Gastrocnemius medialis (tissue), 4 donors: ENCODE measurements at regions of chr17 and their contacts with region 1.

Region 1: DNA sequence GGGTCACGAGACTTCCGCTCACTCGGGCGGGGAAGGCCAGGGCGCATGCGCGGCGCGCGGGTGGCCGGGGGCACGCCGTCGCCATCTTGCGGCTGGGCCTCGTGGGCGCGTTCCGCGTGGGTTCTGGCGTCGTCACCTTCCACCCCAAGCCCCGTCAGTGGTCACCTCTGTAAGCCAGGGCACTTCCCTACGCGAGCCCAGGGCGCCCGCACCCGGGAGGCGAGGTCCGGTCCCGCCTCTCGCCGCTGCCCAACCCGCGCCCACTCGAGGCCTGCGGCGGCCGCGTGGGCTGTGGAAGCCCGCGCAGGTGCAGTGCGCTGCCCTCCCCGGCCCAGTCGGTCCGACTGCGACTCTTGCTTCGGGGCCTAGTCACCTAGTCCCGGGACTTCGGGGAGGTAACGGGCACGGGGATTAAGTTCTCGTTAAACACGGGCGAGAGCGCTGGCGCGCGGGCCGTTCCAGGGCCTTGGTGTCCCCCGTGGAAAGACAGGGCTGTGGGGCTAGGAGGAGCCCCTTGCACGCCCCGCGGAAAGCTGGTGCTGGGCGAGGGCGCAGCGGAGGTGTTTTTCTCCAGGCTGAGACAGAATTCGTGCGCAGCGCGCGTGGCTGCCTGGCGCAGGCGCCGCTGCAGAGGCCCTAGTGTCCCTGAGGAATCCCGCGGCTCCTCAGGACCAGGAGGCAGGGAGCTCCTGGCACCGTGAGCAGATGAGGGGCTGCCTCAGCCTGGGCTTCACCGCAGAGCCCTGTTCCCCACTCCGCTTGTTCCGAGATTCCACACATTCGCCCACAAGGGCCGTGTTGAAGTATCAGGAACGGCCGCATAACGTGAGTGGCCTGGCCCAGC is 472 bp upstream of the ARHGDIA start:
- DNase-seq: peak; percentile 92 to 94
- ATAC-seq: peak; percentile 83 to 88
- H3K4me3 ChIP-seq: peak overlapping the region; percentile 78 to 100 (median 90)
- H3K27ac ChIP-seq: peak overlapping the region; percentile 96 to 99 (median 98)
- H3K4me1 ChIP-seq: peaks cover 35 to 37% of the 10 kb centered on the region in 2 donors
- H3K27me3 ChIP-seq: no peaks in the 10 kb centered on the region
- CTCF ChIP-seq: peak in 3 of 5 experiments; percentile 29 to 66 (median 48)
- POLR2A ChIP-seq: peak; percentile 95 to 97

Region 2: GRCh38 chr17:81941790-81942553 is 70.4 kb after region 1 on chr17:
- in situ Hi-C with region 1: no loop called
- intact Hi-C with region 1: loop called (anchors 5 kb)
- DNase-seq: peak; percentile 73 to 93
- ATAC-seq: peak; percentile 69 to 71
- H3K4me3 ChIP-seq: peak overlapping the region; percentile 44 to 56 (median 48)
- H3K27ac ChIP-seq: peak overlapping the region; percentile 90 to 98 (median 94)
- H3K4me1 ChIP-seq: peaks cover 26 to 44% of the 10 kb centered on the region in 2 donors
- H3K27me3 ChIP-seq: no peaks in the 10 kb centered on the region
- CTCF ChIP-seq: no peak
- POLR2A ChIP-seq: peak; percentile 86 to 90

Region 3: GRCh38 chr17:81977211-81978027 is 105.8 kb after region 1 on chr17 and contains the start of gene ASPSCR1:
- in situ Hi-C with region 1: no loop called
- intact Hi-C with region 1: loop called (anchors 5 kb)
- DNase-seq: peak; percentile 78 to 87
- ATAC-seq: peak; percentile 91 to 95
- H3K4me3 ChIP-seq: peak within 1 kb of the TSS; percentile 75 to 95 (median 88)
- H3K27ac ChIP-seq: peak within 1 kb of the TSS; percentile 90 to 96 (median 94)
- H3K4me1 ChIP-seq: peaks cover 11 to 18% of the 10 kb centered on the region in 2 donors
- H3K27me3 ChIP-seq: no peaks in the 10 kb centered on the region
- CTCF ChIP-seq: peak in 2 of 5 experiments; percentile 22 to 29
- POLR2A ChIP-seq: peak; percentile 78 to 89
- total RNA-seq, gene ASPSCR1: 24.0 to 44.7 (median 32.0) TPM

Region 4: DNA sequence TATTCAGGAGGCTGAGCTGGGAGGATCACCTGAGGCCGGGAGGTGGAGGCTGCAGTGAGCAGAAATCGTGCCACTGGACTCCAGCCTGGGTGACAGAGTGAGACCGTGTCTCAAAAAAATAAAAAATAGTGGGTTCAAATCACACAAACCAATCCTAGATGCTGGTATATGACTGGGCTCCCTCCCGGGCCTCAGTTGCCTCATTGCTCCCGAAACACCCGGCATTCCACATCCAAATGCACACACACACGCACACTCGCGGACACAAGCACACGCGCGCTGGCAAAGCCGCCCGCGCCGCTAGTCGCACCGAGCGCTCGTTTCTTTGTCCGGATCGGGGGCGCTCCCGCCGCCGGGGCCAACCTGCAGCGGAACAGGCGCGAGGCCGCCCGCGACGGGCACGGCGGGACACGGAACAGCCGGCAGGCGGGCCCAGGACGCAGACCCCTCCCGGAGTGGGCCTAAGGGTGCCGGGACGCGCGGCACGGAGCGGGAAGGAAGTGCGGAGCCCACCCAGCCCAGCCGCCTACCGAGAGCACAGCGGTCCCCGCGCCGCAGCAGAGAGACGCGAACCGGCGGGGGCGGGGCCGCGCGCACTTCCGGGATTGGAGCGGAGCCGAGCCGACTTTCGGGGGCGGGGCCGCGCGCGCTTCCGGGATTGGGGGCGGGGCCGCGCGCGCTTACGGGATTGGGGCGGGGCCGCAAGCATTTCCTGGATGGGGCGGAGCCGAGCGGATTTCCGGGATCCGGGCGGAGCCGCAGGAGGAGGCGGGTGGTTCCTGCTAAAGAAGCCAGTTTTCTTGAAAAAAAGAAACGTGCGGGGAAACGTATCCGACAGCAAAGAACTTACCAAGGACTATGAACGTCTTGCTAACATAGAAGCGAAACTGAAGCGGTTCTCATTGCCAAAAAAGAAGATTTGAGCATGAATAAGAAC is 578.8 kb after region 1 on chr17 and contains the start of gene CYBC1:
- in situ Hi-C with region 1: no loop called
- intact Hi-C with region 1: no loop called
- DNase-seq: peak; percentile 83 to 88
- ATAC-seq: peak; percentile 94 to 95
- H3K4me3 ChIP-seq: peak within 1 kb of the TSS; percentile 67 to 100 (median 87)
- H3K27ac ChIP-seq: peak within 1 kb of the TSS; percentile 84 to 91 (median 89)
- H3K4me1 ChIP-seq: peaks cover 10 to 25% of the 10 kb centered on the region in 2 donors
- H3K27me3 ChIP-seq: no peaks in the 10 kb centered on the region
- CTCF ChIP-seq: no peak
- POLR2A ChIP-seq: peak; percentile 92 to 98
- total RNA-seq, gene CYBC1: 17.3 to 29.8 (median 19.3) TPM

Region 5: GRCh38 chr17:82548681-82549303 is 677.2 kb after region 1 on chr17:
- in situ Hi-C with region 1: no loop called
- intact Hi-C with region 1: no loop called
- DNase-seq: peak in 1 of 2 donors; percentile 39
- ATAC-seq: no peak
- H3K4me3 ChIP-seq: no peak overlapping the region
- H3K27ac ChIP-seq: peak overlapping the region; percentile 25 to 82 (median 62)
- H3K4me1 ChIP-seq: peaks cover 62 to 69% of the 10 kb centered on the region in 2 donors
- H3K27me3 ChIP-seq: no peaks in the 10 kb centered on the region
- CTCF ChIP-seq: no peak
- POLR2A ChIP-seq: no peak